ENCODE measurements at regions of chr4 and their contacts with region 1.

Region 1: DNA sequence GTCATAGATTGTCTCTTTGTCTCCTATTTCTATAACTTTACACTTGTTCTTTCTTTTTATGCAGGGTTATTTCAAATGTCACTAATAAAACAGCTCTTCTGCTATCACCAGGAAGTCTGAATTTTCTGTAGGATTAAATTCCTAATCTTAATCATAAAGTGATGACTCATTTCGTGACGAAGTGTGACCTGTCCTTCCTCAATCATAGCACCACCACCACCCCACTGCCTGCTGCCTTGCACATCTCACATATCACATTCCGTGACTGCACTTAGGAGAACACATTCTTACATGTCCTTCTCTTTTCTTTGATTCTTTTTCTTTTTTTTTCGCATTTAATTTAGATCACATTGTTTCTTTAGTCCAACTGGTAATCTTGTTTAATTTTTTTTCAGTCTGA is 57.7 kb upstream of the UGT2B7 start:
- DNase-seq: no peak
- H3K4me3 ChIP-seq: no peak overlapping the region
- H3K4me3 Mint-ChIP-seq: no peak overlapping the region
- H3K27ac Mint-ChIP-seq: no peak overlapping the region
- H3K4me1 ChIP-seq: 0 out of 2 replicates have a peak, but pooled peaks cover 4% of the 10 kb centered on the region
- H3K4me1 Mint-ChIP-seq: no peaks in the 10 kb centered on the region
- H3K27me3 ChIP-seq: no peaks in the 10 kb centered on the region
- H3K27me3 Mint-ChIP-seq: no peaks in the 10 kb centered on the region
- CTCF ChIP-seq: no peak

Region 2: DNA sequence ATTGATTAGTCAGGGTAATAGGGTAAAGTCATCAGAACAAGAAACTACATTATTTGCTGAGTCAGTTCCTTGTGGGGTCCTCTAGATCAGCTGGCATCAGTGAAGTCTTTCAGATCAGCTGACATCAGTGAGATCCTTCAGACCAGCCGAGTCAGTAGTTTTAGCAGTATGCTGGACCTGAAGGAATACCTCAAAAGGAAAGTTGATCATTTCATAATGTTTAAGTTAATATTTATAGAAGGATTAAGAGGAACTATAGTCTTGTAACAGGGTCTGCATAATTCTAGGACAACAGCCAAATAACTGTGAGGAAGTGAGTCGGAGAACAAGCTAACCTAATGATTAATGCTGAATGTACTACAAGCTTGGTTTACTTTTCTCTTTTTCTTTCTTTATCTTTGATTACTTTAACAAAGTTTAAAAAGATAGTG is 56.7 kb after region 1 on chr4:
- CTCF ChIA-PET with region 1: no interaction called
- POLR2A ChIA-PET with region 1: no interaction called
- intact Hi-C with region 1: loop called (anchors 10 kb)
- DNase-seq: no peak
- H3K4me3 ChIP-seq: no peak overlapping the region
- H3K4me3 Mint-ChIP-seq: no peak overlapping the region
- H3K27ac Mint-ChIP-seq: peak overlapping the region; percentile 81
- H3K4me1 ChIP-seq: peaks cover 31% of the 10 kb centered on the region
- H3K4me1 Mint-ChIP-seq: peaks cover 28% of the 10 kb centered on the region
- H3K27me3 ChIP-seq: no peaks in the 10 kb centered on the region
- H3K27me3 Mint-ChIP-seq: no peaks in the 10 kb centered on the region
- CTCF ChIP-seq: no peak

Measured in Caco-2 (cell line).